Activated CD4-positive, alpha-beta memory T cell treated with anti-CD3 and anti-CD28 coated beads for 36 hours (primary cell): ENCODE measurements at regions of chr17 and their contacts with region 1.

Region 1: GRCh38 chr17:82273327-82274133 is at the start of gene CSNK1D:
- DNase-seq: peak; percentile 94
- H3K4me3 Mint-ChIP-seq: peak within 1 kb of the TSS; percentile 88
- H3K27ac Mint-ChIP-seq: peak within 1 kb of the TSS; percentile 98
- H3K4me1 Mint-ChIP-seq: peaks cover 40% of the 10 kb centered on the region
- H3K27me3 Mint-ChIP-seq: no peaks in the 10 kb centered on the region
- total RNA-seq, gene CSNK1D: 110 to 111 TPM

Region 2: GRCh38 chr17:82022981-82023374 is 250.6 kb before region 1 on chr17 and contains the start of gene LRRC45:
- CTCF ChIA-PET with region 1: no interaction called
- POLR2A ChIA-PET with region 1: no interaction called
- intact Hi-C with region 1: loop called (anchors 1 kb)
- DNase-seq: peak; percentile 100
- H3K4me3 Mint-ChIP-seq: peak within 1 kb of the TSS; percentile 84
- H3K27ac Mint-ChIP-seq: peak within 1 kb of the TSS; percentile 66
- H3K4me1 Mint-ChIP-seq: peaks cover 24% of the 10 kb centered on the region
- H3K27me3 Mint-ChIP-seq: no peaks in the 10 kb centered on the region
- total RNA-seq, gene LRRC45: 16.3 to 19.0 TPM

Region 3: DNA sequence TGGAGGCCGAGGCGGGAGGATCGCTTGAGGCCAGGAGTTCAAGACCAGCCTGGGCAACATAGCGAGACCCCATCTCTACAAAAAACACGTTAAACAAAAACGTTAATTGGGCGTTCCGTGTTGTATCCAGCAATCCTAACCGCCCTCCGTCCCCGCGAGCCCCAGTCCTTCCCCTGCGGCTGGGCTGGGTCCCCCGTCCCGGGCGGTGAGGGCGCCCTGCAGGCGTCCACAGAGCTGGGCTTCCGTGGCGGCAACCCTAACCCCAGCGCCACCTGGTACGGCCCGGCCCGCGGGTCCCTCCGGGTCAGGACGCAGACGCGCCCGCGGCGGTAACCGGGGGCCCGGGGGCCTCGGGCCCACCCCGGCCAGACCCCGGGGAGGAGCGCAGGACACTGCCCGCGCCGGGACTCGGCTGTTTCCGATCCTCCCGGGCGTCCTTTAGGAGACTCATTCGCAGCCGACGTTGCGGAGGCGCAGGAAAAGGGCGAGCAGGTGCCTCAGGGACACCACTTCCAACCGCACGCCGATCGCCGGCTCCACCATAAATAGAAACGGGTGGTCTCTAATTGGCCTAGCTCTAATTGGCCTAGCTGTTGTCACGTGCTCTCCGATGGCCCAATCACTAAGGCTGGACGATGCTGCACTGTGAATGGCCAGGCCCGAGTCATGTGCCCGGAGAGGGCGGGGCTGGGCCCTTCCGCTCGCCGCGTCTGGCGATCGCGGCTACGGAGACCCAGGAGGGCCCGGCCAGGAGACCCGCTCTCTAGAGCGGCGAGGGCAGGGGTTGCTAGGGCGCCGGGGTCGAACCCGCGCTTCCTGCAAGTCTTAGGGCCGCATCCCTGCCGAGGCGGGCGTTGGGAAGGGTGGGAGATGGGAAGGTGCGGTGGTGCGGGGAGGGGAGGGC is 19.0 kb after region 1 on chr17:
- CTCF ChIA-PET with region 1: interaction called, 10 read pairs
- POLR2A ChIA-PET with region 1: interaction called, 19 read pairs
- intact Hi-C with region 1: loop called (anchors 1 kb)
- DNase-seq: peak; percentile 96
- H3K4me3 Mint-ChIP-seq: peak overlapping the region; percentile 82
- H3K27ac Mint-ChIP-seq: peak overlapping the region; percentile 87
- H3K4me1 Mint-ChIP-seq: peaks cover 49% of the 10 kb centered on the region
- H3K27me3 Mint-ChIP-seq: no peaks in the 10 kb centered on the region

Region 4: GRCh38 chr17:82320956-82321927 is 47.7 kb after region 1 on chr17:
- CTCF ChIA-PET with region 1: interaction called, 5 read pairs
- POLR2A ChIA-PET with region 1: interaction called, 3 read pairs
- intact Hi-C with region 1: loop called (anchors 2 kb)
- DNase-seq: peak; percentile 88
- H3K4me3 Mint-ChIP-seq: peak overlapping the region; percentile 80
- H3K27ac Mint-ChIP-seq: no peak overlapping the region
- H3K4me1 Mint-ChIP-seq: peaks cover 32% of the 10 kb centered on the region
- H3K27me3 Mint-ChIP-seq: no peaks in the 10 kb centered on the region